Heart left ventricle (tissue), 16 donors: ENCODE measurements at regions of chr6 and their contacts with region 1.

Region 1: GRCh38 chr6:135851442-135852271 is at the start of gene PDE7B:
- DNase-seq: peak; percentile 79 to 89 (median 85)
- ATAC-seq: peak; percentile 89 to 98 (median 96)
- H3K4me3 ChIP-seq: peak within 1 kb of the TSS; percentile 3 to 62 (median 52)
- H3K27ac ChIP-seq: peak within 1 kb of the TSS; percentile 25 to 84 (median 64)
- H3K4me1 ChIP-seq: peaks cover 0 to 28% (median 10%) of the 10 kb centered on the region in 12 donors
- H3K27me3 ChIP-seq: no peaks in the 10 kb centered on the region
- CTCF ChIP-seq: no peak
- POLR2A ChIP-seq: peak in 1 of 2 donors; percentile 80
- total RNA-seq, gene PDE7B: 4.8 to 29.1 (median 12.0) TPM

Region 2: DNA sequence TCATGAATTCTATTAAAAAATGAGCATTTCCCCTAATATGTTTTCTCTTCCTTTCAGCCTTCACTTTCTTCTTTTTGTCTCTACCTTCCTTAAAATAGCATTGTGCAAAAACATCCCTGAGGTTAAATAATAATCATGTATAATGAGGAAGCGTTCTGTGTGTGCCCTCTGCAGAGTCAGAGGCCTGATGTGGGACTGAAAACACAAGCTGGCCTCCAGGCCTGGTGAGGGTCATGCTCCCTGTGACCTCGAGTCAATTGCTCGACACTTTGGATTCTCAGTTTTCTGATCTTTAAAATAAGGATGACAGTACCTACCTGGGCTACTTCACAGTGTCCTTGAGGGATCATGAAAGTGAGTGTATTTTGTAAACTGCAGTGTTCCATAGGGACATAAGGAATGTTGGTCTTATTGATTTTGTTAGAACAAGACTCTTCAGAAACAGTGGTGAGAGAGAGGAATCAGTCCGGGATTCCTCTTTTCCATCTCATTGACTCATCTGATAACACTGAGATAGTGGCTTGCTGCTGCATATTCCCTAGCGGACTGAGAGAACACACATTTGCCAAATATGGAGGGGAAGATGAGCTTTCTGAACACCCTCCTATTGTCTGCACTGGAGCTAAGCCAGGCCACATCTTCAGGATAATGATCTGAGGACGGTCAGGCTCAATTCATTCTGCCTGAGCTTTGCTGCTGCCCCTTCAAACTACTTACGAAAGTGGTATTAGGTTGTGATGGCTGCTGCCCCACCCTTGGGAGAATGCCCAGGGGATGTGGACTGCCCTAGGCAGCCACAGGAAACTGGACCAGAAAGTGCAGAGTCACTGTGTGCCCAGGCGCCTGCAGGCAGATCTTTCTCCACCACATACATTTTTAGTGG is 39.8 kb before region 1 on chr6:
- intact Hi-C with region 1: loop called in 1 of 10 experiments (anchors 5 kb)
- DNase-seq: peak in 3 of 5 donors; percentile 9 to 41 (median 31)
- ATAC-seq: peak in 3 of 4 donors; percentile 45 to 53 (median 51)
- H3K4me3 ChIP-seq: no peak overlapping the region
- H3K27ac ChIP-seq: peak overlapping the region; percentile 10 to 64 (median 38)
- H3K4me1 ChIP-seq: peaks cover 0 to 24% (median 16%) of the 10 kb centered on the region in 12 donors
- H3K27me3 ChIP-seq: peaks cover 0 to 2% (median 0%) of the 10 kb centered on the region in 9 donors
- CTCF ChIP-seq: no peak
- POLR2A ChIP-seq: no peak

Region 3: GRCh38 chr6:135830452-135830881 is 21.2 kb before region 1 on chr6:
- intact Hi-C with region 1: no loop called
- DNase-seq: no peak
- ATAC-seq: no peak
- H3K4me3 ChIP-seq: no peak overlapping the region
- H3K27ac ChIP-seq: no peak overlapping the region
- H3K4me1 ChIP-seq: no peaks in the 10 kb centered on the region
- H3K27me3 ChIP-seq: peaks cover 0 to 5% (median 0%) of the 10 kb centered on the region in 9 donors
- CTCF ChIP-seq: no peak
- POLR2A ChIP-seq: no peak

Region 4: GRCh38 chr6:135909737-135910387 is 58.2 kb after region 1 on chr6:
- intact Hi-C with region 1: loop called in 3 of 10 experiments (anchors 10 kb)
- DNase-seq: peak in 1 of 5 donors; percentile 27
- ATAC-seq: peak in 1 of 4 donors; percentile 42
- H3K4me3 ChIP-seq: no peak overlapping the region
- H3K27ac ChIP-seq: no peak overlapping the region
- H3K4me1 ChIP-seq: no peaks in the 10 kb centered on the region
- H3K27me3 ChIP-seq: no peaks in the 10 kb centered on the region
- CTCF ChIP-seq: peak in 11 of 12 donors; percentile 27 to 60 (median 49)
- POLR2A ChIP-seq: no peak